ENCODE measurements at regions of chr6 and their contacts with region 1.

Region 1: DNA sequence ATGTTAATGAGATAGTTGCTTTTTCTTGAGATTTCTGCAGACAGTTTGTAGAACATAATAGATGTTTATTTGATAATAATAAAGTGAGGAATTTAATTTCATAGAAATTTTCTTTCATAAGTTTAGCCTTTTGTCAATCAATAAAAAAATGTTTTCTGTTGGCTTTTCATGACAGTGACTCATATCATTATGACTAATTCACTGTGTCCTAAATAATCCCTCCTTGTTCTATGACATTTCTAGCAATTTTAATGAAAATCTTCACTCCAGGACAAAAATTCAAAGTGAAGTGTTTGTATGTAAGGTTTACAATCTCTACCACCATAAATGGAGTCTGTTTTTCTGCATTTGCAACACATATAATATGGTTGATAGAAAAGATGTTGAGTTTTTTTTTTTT is 109.9 kb downstream of the UTRN start:
- DNase-seq: no peak
- ATAC-seq: no peak
- H3K4me3 ChIP-seq: no peak overlapping the region
- H3K4me3 Mint-ChIP-seq: no peak overlapping the region
- H3K27ac ChIP-seq: no peak overlapping the region
- H3K27ac Mint-ChIP-seq: peak overlapping the region; percentile 77 to 91
- H3K4me1 ChIP-seq: peaks cover 8% of the 10 kb centered on the region
- H3K4me1 Mint-ChIP-seq: peaks cover 81 to 83% of the 10 kb centered on the region in 2 donors
- H3K27me3 ChIP-seq: no peaks in the 10 kb centered on the region
- H3K27me3 Mint-ChIP-seq: no peaks in the 10 kb centered on the region
- CTCF ChIP-seq: no peak

Region 2: GRCh38 chr6:144362042-144363018 is 32.7 kb before region 1 on chr6:
- intact Hi-C with region 1: loop called (anchors 5 kb)
- DNase-seq: no peak
- ATAC-seq: peak; percentile 31 to 56 (median 49)
- H3K4me3 ChIP-seq: no peak overlapping the region
- H3K4me3 Mint-ChIP-seq: peak overlapping the region; percentile 41
- H3K27ac ChIP-seq: peak overlapping the region; percentile 30
- H3K27ac Mint-ChIP-seq: peak overlapping the region; percentile 74 to 99
- H3K4me1 ChIP-seq: peaks cover 39% of the 10 kb centered on the region
- H3K4me1 Mint-ChIP-seq: peaks cover 89 to 90% of the 10 kb centered on the region in 2 donors
- H3K27me3 ChIP-seq: no peaks in the 10 kb centered on the region
- H3K27me3 Mint-ChIP-seq: no peaks in the 10 kb centered on the region
- CTCF ChIP-seq: no peak

Measured in natural killer cell (primary cell).